ENCODE measurements at regions of chr19 and their contacts with region 1.

Region 1: GRCh38 chr19:39218230-39219007 is 14.4 kb upstream of the SYCN start:
- DNase-seq: no peak
- H3K4me3 ChIP-seq: no peak overlapping the region
- H3K27ac ChIP-seq: no peak overlapping the region
- H3K4me1 ChIP-seq: no peaks in the 10 kb centered on the region
- H3K27me3 ChIP-seq: no peaks in the 10 kb centered on the region
- CTCF ChIP-seq: no peak

Region 2: DNA sequence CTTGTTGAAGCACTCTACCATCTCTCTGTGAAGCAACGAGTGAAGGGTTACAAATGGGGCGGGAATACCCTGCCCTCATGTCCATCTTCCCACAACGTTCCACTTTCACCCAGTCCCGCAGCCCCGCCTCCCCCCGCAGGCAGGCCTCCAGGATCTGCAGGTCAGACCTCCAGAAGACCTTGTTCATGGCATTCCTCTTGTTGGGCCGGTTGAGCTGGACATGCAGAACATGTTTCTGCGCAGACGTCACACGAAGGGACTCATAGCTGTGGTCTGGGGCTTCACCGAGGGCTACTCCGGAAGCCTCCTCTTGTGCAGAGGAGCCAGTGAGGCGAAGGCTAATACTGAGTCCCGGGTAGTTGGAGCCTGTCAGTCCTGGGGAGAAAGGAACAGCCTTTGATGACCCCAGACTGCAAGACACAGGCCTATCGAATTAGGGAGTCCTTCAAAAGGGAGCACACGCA is 387.2 kb before region 1 on chr19:
- CTCF ChIA-PET with region 1: no interaction called
- dilution Hi-C with region 1: no loop called
- in situ Hi-C with region 1: no loop called
- intact Hi-C with region 1: no loop called
- DNase-seq: peak; percentile 86
- H3K4me3 ChIP-seq: peak overlapping the region; percentile 57 to 83 (median 60)
- H3K27ac ChIP-seq: peak overlapping the region; percentile 74
- H3K4me1 ChIP-seq: peaks cover 31% of the 10 kb centered on the region
- H3K27me3 ChIP-seq: no peaks in the 10 kb centered on the region
- CTCF ChIP-seq: no peak

Region 3: GRCh38 chr19:38869856-38870607 is 348.4 kb before region 1 on chr19:
- CTCF ChIA-PET with region 1: no interaction called
- dilution Hi-C with region 1: no loop called
- in situ Hi-C with region 1: no loop called
- intact Hi-C with region 1: no loop called
- DNase-seq: peak; percentile 46
- H3K4me3 ChIP-seq: peak overlapping the region in 1 of 3 experiments; percentile 39
- H3K27ac ChIP-seq: no peak overlapping the region
- H3K4me1 ChIP-seq: peaks cover 13% of the 10 kb centered on the region
- H3K27me3 ChIP-seq: no peaks in the 10 kb centered on the region
- CTCF ChIP-seq: peak; percentile 45 to 78

Region 4: GRCh38 chr19:39297654-39298634 is 79.5 kb after region 1 on chr19:
- CTCF ChIA-PET with region 1: no interaction called
- dilution Hi-C with region 1: loop called (anchors 5 kb)
- in situ Hi-C with region 1: no loop called
- intact Hi-C with region 1: no loop called
- DNase-seq: no peak
- H3K4me3 ChIP-seq: no peak overlapping the region
- H3K27ac ChIP-seq: no peak overlapping the region
- H3K4me1 ChIP-seq: no peaks in the 10 kb centered on the region
- H3K27me3 ChIP-seq: no peaks in the 10 kb centered on the region
- CTCF ChIP-seq: no peak

Region 5: GRCh38 chr19:39335168-39335548 is 116.7 kb after region 1 on chr19:
- CTCF ChIA-PET with region 1: no interaction called
- dilution Hi-C with region 1: loop called (anchors 5 kb)
- in situ Hi-C with region 1: no loop called
- intact Hi-C with region 1: no loop called
- DNase-seq: no peak
- H3K4me3 ChIP-seq: no peak overlapping the region
- H3K27ac ChIP-seq: no peak overlapping the region
- H3K4me1 ChIP-seq: no peaks in the 10 kb centered on the region
- H3K27me3 ChIP-seq: no peaks in the 10 kb centered on the region
- CTCF ChIP-seq: no peak